ENCODE measurements at regions of chr7 and their contacts with region 1.

Region 1: GRCh38 chr7:23721456-23721855 is 11.4 kb downstream of the STK31 start:
- DNase-seq: no peak
- H3K4me3 ChIP-seq: no peak overlapping the region
- H3K27ac ChIP-seq: no peak overlapping the region
- H3K4me1 ChIP-seq: peaks cover 0 to 5% (median 0%) of the 10 kb centered on the region in 4 donors
- H3K27me3 ChIP-seq: no peaks in the 10 kb centered on the region
- CTCF ChIP-seq: no peak
- EP300 ChIP-seq: no peak
- POLR2A ChIP-seq: no peak

Region 2: DNA sequence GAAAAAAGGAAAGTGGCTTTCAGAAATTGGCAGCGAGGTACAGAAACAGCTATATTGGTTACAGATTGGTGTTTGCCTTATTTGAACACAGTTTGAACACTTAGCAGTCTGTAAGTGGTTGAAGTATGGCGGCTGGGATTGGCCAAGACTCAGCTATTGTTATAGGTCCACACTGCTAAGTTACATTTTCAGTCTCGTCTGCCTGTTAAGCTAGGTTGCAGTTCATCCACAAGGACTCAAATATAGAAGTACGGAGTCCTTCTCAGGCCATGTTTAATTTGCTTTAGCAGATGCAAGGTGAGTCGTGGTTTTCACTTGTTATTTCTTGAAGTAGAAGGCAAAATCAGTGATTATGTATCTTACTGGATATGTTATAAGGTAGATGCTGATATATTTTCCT is 61.7 kb after region 1 on chr7:
- in situ Hi-C with region 1: no loop called
- intact Hi-C with region 1: no loop called
- DNase-seq: no peak
- H3K4me3 ChIP-seq: no peak overlapping the region
- H3K27ac ChIP-seq: no peak overlapping the region
- H3K4me1 ChIP-seq: no peaks in the 10 kb centered on the region
- H3K27me3 ChIP-seq: no peaks in the 10 kb centered on the region
- CTCF ChIP-seq: no peak
- EP300 ChIP-seq: no peak
- POLR2A ChIP-seq: no peak

Region 3: DNA sequence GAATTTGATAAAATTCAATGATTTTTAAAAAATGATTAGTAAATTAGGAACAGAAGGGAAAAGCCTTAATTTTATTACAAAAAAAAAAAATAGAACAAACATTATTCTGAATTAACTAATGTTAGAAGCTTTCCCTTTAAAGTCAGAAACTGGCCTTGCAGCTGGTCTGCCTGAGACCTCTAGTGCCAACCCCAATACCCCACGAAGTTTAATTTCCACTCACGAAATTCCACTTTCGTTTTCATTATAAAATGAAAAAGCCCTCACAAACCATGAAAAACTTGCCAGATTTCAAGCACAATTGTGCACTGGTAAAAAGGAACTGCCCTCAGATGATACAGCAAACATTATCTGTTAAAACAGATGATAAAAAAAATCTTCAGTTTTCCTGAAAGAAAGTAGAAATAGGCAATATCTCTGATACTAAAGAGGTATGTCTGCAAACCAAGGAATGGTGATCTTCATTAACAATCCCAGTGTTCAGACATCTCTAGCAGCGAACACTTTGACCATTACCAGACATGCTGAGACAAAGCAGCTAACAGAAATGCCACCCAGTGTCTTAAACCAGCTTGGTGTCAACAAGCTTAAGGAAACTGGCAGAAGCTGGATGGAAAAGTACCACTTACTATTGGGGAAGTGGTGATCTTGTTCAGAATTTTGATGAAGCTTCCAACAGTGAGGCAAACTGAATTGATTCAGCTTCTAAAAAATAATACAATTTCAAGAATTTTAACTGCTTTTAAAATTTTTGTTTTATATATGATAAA is 932.0 kb after region 1 on chr7:
- in situ Hi-C with region 1: no loop called
- intact Hi-C with region 1: loop called (anchors 10 kb)
- DNase-seq: no peak
- H3K4me3 ChIP-seq: peak overlapping the region in 1 of 4 donors; percentile 13
- H3K27ac ChIP-seq: no peak overlapping the region
- H3K4me1 ChIP-seq: no peaks in the 10 kb centered on the region
- H3K27me3 ChIP-seq: no peaks in the 10 kb centered on the region
- CTCF ChIP-seq: no peak
- EP300 ChIP-seq: no peak
- POLR2A ChIP-seq: no peak

Region 4: DNA sequence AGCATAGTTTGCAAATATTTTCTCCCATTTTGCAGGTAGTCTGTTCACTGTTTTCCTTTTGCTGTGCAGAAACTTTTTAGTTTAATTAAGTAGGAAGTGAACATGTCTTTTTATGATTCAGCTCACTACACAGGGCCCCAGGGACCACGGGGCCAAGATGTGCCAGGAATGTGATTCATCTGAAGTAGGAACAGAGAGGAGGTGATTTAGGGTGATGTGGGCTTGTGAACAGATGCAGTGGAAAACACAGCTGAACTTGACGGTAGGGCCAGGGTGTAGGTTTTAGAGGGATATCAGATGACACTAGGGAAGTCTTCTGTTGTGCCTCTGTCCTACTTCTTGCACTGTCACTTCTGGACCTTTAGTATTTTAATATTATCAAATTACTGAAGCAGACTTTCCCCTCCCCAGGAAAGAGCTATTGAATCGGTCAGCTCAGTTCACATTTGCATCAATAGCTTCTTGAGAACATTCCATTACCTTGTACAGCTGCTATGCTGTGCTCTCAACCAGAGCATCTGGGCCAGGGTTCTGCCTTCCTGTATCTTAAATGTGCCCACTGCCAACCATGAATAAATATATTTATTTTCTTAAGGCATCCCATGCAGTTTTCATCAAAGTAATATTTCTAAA is 1161.6 kb after region 1 on chr7:
- in situ Hi-C with region 1: no loop called
- intact Hi-C with region 1: no loop called
- DNase-seq: no peak
- H3K4me3 ChIP-seq: no peak overlapping the region
- H3K27ac ChIP-seq: no peak overlapping the region
- H3K4me1 ChIP-seq: peaks cover 0 to 5% (median 2%) of the 10 kb centered on the region in 4 donors
- H3K27me3 ChIP-seq: no peaks in the 10 kb centered on the region
- CTCF ChIP-seq: no peak
- EP300 ChIP-seq: no peak
- POLR2A ChIP-seq: no peak